T-cell (primary cell): ENCODE measurements at regions of chr7 and their contacts with region 1.

Region 1: GRCh38 chr7:150502519-150502918 is 12.2 kb upstream of the GIMAP7 start:
- DNase-seq: peak in 23 of 35 experiments; percentile 30 to 70 (median 39)
- ATAC-seq: peak; percentile 89 to 92 (median 90)
- H3K4me3 ChIP-seq: no peak overlapping the region
- H3K4me3 Mint-ChIP-seq: peak overlapping the region; percentile 32 to 63 (median 60)
- H3K27ac ChIP-seq: peak overlapping the region; percentile 81
- H3K27ac Mint-ChIP-seq: peak overlapping the region; percentile 95
- H3K4me1 ChIP-seq: peaks cover 39 to 41% of the 10 kb centered on the region in 2 experiments
- H3K4me1 Mint-ChIP-seq: peaks cover 84 to 92% (median 87%) of the 10 kb centered on the region in 3 donors
- H3K27me3 ChIP-seq: no peaks in the 10 kb centered on the region
- H3K27me3 Mint-ChIP-seq: no peaks in the 10 kb centered on the region

Region 2: GRCh38 chr7:150481186-150481920 is 21.2 kb before region 1 on chr7:
- CTCF ChIA-PET with region 1: interaction called in 1 of 2 experiments, 11 read pairs
- POLR2A ChIA-PET with region 1: interaction called, 5 to 7 read pairs
- DNase-seq: peak in 34 of 35 experiments; percentile 18 to 76 (median 51)
- ATAC-seq: peak; percentile 54 to 73 (median 68)
- H3K4me3 ChIP-seq: peak overlapping the region in 1 of 2 donors; percentile 24
- H3K4me3 Mint-ChIP-seq: peak overlapping the region; percentile 76 to 85 (median 76)
- H3K27ac ChIP-seq: peak overlapping the region; percentile 97
- H3K27ac Mint-ChIP-seq: peak overlapping the region; percentile 100
- H3K4me1 ChIP-seq: peaks cover 73 to 77% of the 10 kb centered on the region in 2 experiments
- H3K4me1 Mint-ChIP-seq: peaks cover 98 to 99% (median 98%) of the 10 kb centered on the region in 3 donors
- H3K27me3 ChIP-seq: no peaks in the 10 kb centered on the region
- H3K27me3 Mint-ChIP-seq: no peaks in the 10 kb centered on the region

Region 3: GRCh38 chr7:150514748-150515222 is 12.3 kb after region 1 on chr7 and contains the start of gene GIMAP7:
- CTCF ChIA-PET with region 1: interaction called, 3 to 4 read pairs
- POLR2A ChIA-PET with region 1: interaction called, 7 to 10 read pairs
- DNase-seq: peak; percentile 41 to 80 (median 68)
- ATAC-seq: peak; percentile 76 to 87 (median 78)
- H3K4me3 ChIP-seq: peak within 1 kb of the TSS; percentile 93 to 94
- H3K4me3 Mint-ChIP-seq: peak within 1 kb of the TSS; percentile 95 to 100 (median 99)
- H3K27ac ChIP-seq: peak within 1 kb of the TSS; percentile 88
- H3K27ac Mint-ChIP-seq: peak within 1 kb of the TSS; percentile 99 to 100
- H3K4me1 ChIP-seq: peaks cover 34 to 42% of the 10 kb centered on the region in 2 experiments
- H3K4me1 Mint-ChIP-seq: peaks cover 49 to 51% (median 49%) of the 10 kb centered on the region in 3 donors
- H3K27me3 ChIP-seq: no peaks in the 10 kb centered on the region
- H3K27me3 Mint-ChIP-seq: no peaks in the 10 kb centered on the region
- total RNA-seq, gene GIMAP7: 76.8 to 430 (median 392) TPM